ENCODE measurements at regions of chr19 and their contacts with region 1.

Region 1: DNA sequence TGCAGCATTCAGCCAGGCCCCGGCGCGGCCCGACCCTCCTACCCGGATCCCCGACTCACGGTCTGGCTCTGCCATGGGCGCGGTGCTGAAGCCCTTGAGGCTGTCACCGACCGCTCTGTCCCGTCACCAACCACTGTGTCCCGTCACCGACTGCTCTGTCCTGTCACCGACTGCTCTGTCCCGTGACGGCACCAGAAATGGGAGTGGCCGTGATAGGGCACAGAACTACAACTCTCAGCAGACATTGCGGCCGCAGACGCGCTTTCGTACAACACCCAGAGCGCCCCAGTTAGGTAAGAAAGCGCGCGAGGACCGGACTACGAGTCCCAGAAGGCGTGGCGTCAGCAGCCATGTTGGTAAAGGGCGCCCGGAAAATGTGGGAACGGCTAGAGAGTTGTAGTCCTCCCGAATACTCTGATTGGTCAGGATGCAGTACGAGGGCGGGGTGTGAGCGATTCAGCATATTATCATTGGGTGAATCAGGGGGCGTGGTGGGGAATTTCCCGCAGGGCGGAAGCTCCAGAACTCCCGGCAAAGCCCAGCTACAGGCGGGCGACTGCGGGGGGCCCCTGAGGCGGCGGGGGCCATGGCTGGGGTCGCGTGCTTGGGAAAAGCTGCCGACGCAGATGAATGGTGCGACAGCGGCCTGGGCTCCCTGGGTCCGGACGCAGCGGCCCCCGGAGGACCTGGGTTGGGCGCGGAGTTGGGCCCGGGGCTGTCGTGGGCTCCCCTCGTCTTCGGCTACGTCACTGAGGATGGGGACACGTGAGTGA is at the starts of genes NFKBIB and SIRT2:
- DNase-seq: peak; percentile 100
- ATAC-seq: peak; percentile 97
- H3K4me3 ChIP-seq: peak within 1 kb of the TSS; percentile 55 to 75
- H3K27ac ChIP-seq: peak within 1 kb of the TSS; percentile 89
- H3K4me1 ChIP-seq: peaks cover 21% of the 10 kb centered on the region
- H3K27me3 ChIP-seq: no peaks in the 10 kb centered on the region
- CTCF ChIP-seq: no peak
- total RNA-seq, gene NFKBIB: 185 TPM
- total RNA-seq, gene SIRT2: 162 TPM

Region 2: DNA sequence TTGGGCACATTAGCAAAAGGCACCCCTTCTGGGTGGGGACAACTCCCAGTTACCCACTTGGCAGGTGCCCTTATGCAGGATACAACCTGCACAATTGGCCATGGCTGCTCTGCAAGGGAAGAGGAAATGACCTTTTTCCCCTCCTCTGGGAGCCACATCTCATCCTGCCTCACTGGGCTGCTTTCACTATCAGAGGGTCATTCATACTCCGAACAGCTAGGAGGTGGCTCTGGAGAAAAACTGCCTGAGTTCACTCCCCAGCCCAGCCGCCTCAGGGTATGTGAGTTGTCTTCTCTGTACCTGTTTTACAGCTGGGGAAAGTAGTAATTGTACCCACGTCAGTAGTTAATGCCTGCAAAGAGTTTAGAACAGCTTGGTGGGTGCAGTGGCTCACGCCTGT is 259.3 kb before region 1 on chr19:
- CTCF ChIA-PET with region 1: interaction called, 11 read pairs
- POLR2A ChIA-PET with region 1: no interaction called
- in situ Hi-C with region 1: no loop called
- intact Hi-C with region 1: no loop called
- DNase-seq: no peak
- ATAC-seq: peak; percentile 15
- H3K4me3 ChIP-seq: no peak overlapping the region
- H3K27ac ChIP-seq: no peak overlapping the region
- H3K4me1 ChIP-seq: peaks cover 8% of the 10 kb centered on the region
- H3K27me3 ChIP-seq: no peaks in the 10 kb centered on the region
- CTCF ChIP-seq: no peak

Region 3: DNA sequence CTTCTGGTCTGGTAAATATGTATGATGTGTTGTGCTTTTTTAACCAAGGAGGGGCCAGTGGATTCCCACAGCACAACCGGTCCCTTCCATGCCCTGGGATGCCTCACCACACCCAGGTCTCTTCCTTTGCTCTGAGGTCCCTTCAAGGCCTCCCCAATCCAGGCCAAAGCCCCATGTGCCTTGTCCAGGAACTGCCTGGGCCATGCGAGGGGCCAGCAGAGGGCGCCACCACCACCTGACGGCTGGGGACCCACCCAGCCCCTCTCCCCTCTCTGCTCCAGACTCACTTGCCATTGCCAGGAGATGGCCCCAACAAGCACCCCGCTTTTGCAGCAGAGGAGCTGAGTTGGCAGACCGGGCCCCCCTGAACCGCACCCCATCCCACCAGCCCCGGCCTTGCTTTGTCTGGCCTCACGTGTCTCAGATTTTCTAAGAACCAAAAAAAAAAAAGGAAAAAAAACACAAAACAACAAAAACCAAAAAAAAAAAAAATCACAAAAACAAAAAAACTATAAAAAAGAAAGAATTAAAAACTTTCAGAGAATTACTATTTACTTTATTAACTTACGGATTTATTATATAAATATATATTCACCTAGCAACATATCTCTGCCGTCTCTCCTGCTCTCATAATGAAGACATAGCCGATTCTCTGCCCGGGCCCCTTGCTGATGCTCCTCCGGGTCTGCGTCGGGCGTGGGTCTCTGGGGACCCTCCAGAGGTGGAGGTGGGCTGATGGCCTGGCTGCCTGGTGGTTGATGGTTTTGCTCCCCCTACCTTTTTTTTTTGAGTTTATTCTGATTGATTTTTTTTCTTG is 169.8 kb before region 1 on chr19:
- CTCF ChIA-PET with region 1: no interaction called
- POLR2A ChIA-PET with region 1: no interaction called
- in situ Hi-C with region 1: no loop called
- intact Hi-C with region 1: no loop called
- DNase-seq: peak; percentile 61
- ATAC-seq: peak; percentile 46
- H3K4me3 ChIP-seq: no peak overlapping the region
- H3K27ac ChIP-seq: peak overlapping the region; percentile 93
- H3K4me1 ChIP-seq: peaks cover 96% of the 10 kb centered on the region
- H3K27me3 ChIP-seq: no peaks in the 10 kb centered on the region
- CTCF ChIP-seq: no peak

Region 4: DNA sequence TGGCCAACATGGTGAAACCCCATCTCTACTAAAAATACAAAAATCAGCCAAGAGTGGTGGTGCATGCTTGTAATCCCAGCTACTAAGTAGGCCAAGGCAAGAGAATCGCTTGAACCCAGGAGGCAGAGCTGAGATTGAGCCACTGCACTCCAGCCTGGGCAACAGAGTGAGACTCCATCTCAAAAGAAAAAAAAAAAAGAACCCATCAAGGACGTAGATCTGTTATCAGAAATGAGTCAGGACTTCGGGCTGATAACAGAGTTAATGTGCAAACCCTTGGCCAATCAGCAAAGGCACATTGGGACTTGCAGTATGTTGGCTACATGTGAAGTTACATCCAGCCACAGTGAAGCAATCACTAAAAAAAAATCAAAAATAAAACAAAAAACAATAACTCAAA is 115.4 kb before region 1 on chr19:
- CTCF ChIA-PET with region 1: no interaction called
- POLR2A ChIA-PET with region 1: interaction called, 10 read pairs
- in situ Hi-C with region 1: no loop called
- intact Hi-C with region 1: no loop called
- DNase-seq: no peak
- ATAC-seq: no peak
- H3K4me3 ChIP-seq: no peak overlapping the region
- H3K27ac ChIP-seq: no peak overlapping the region
- H3K4me1 ChIP-seq: peaks cover 9% of the 10 kb centered on the region
- H3K27me3 ChIP-seq: no peaks in the 10 kb centered on the region
- CTCF ChIP-seq: no peak

Region 5: GRCh38 chr19:38883286-38883685 is 16.3 kb before region 1 on chr19:
- CTCF ChIA-PET with region 1: interaction called, 13 read pairs
- POLR2A ChIA-PET with region 1: interaction called, 14 read pairs
- in situ Hi-C with region 1: no loop called
- intact Hi-C with region 1: no loop called
- DNase-seq: no peak
- ATAC-seq: no peak
- H3K4me3 ChIP-seq: no peak overlapping the region
- H3K27ac ChIP-seq: no peak overlapping the region
- H3K4me1 ChIP-seq: peaks cover 1% of the 10 kb centered on the region; the same call in 1 of the 2 replicates
- H3K27me3 ChIP-seq: no peaks in the 10 kb centered on the region
- CTCF ChIP-seq: no peak

Region 6: DNA sequence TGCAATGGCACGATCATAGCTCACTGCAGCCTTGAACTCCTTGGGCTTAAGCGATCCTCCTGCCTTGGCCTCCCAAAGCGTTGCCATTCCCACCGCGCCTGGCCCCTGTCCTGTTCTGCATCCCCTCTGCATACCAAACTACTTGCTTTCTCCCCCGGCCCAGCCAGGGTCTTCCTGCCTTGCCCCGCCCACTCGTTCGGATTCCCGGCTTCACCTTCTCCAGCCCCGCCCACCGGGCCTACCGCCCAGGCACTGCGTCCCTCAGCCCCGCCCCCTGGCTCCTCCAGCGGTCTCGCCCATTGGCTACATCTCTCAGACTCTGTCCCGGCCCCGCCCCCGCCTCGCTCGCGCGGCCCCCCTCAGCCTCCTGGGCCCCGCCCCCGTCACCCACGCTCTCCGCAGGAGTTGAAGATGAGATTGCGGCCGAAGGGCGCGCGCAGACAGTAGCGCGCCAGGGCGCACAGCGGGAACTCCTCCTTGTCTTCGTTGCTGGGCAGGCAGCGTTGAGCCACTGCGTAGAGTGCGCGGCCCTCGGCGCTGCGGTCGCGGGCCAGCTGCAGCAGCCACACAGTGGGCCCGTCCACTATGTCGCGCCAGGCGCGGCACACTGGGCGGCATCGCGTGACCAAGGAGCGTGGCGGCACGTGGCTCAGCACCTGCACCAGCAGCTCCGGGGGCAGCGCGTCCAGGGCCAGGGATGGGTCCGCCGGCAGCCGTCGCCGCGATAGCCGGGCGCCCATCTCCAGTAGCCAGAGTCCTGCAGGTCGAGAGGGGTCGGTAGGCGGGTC is 50.1 kb after region 1 on chr19:
- CTCF ChIA-PET with region 1: no interaction called
- POLR2A ChIA-PET with region 1: no interaction called
- in situ Hi-C with region 1: no loop called
- intact Hi-C with region 1: no loop called
- DNase-seq: no peak
- ATAC-seq: peak; percentile 28
- H3K4me3 ChIP-seq: no peak overlapping the region
- H3K27ac ChIP-seq: no peak overlapping the region
- H3K4me1 ChIP-seq: no peaks in the 10 kb centered on the region
- H3K27me3 ChIP-seq: no peaks in the 10 kb centered on the region
- CTCF ChIP-seq: no peak